ENCODE measurements at regions of chr14 and their contacts with region 1.

Region 1: GRCh38 chr14:20682435-20683124 is 1.8 kb upstream of the RNASE4 start:
- DNase-seq: peak; percentile 92
- ATAC-seq: peak; percentile 67
- H3K4me3 ChIP-seq: peak overlapping the region; percentile 65
- H3K27ac ChIP-seq: peak overlapping the region; percentile 90
- H3K4me1 ChIP-seq: no peaks in the 10 kb centered on the region
- H3K27me3 ChIP-seq: no peaks in the 10 kb centered on the region
- CTCF ChIP-seq: no peak
- POLR2A ChIP-seq: peak; percentile 92
- RAD21 ChIP-seq: no peak

Region 2: DNA sequence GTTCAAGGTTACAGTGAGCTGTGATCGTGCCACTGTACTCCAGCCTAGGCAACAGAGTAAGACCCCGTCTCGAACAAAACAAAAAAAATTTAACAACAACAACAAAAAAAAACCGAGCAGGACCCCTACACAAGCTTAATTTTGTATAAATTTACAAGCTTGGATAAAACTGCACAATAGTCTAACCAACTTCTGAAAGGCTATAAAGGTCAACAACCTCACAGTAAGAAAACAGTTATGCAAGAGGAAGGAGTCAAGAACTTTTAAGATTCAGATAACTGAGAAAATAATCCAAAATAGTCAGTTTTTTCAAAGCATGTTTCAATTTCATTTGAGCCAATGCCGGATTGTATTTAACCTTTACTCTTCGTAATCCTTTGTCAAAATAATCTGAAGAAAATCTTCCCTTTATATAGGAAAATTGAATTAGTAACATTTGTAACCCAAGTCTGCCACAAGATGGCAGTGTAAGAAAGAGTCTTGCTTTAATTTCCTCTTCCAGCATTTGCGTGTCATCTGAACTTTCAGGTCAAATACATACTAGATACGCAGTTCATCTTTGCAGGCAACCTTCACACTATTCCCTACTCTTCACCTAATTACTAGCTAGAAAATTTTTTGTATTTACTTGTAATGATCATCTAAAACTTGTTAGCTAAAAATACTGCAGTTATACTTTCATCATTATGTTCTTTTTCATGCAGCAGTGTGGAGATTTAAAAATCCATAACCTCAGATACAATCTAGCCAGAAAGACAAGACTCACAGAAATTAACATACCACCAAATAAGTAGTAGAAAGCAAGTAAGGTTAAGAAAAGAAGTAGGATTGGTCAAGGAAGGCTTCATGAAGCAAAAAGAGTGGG is 355.3 kb before region 1 on chr14:
- CTCF ChIA-PET with region 1: no interaction called
- POLR2A ChIA-PET with region 1: no interaction called
- dilution Hi-C with region 1: no loop called
- in situ Hi-C with region 1: loop called (anchors 10 kb)
- intact Hi-C with region 1: no loop called
- DNase-seq: peak; percentile 72
- ATAC-seq: peak; percentile 91
- H3K4me3 ChIP-seq: no peak overlapping the region
- H3K27ac ChIP-seq: no peak overlapping the region
- H3K4me1 ChIP-seq: no peaks in the 10 kb centered on the region
- H3K27me3 ChIP-seq: no peaks in the 10 kb centered on the region
- CTCF ChIP-seq: peak; percentile 76
- POLR2A ChIP-seq: no peak
- RAD21 ChIP-seq: peak; percentile 76

Region 3: GRCh38 chr14:20461274-20462001 is 221.1 kb before region 1 on chr14 and contains the start of gene PIP4P1:
- CTCF ChIA-PET with region 1: no interaction called
- POLR2A ChIA-PET with region 1: interaction called, 4 read pairs
- dilution Hi-C with region 1: no loop called
- in situ Hi-C with region 1: no loop called
- intact Hi-C with region 1: loop called (anchors 1 kb)
- DNase-seq: peak; percentile 100
- ATAC-seq: peak; percentile 96
- H3K4me3 ChIP-seq: peak within 1 kb of the TSS; percentile 53
- H3K27ac ChIP-seq: peak within 1 kb of the TSS; percentile 54
- H3K4me1 ChIP-seq: 0 out of 2 replicates have a peak, but pooled peaks cover 4% of the 10 kb centered on the region
- H3K27me3 ChIP-seq: no peaks in the 10 kb centered on the region
- CTCF ChIP-seq: no peak
- POLR2A ChIP-seq: no peak; the same call in none of the 2 replicates
- RAD21 ChIP-seq: no peak
- total RNA-seq, gene PIP4P1: 15.0 and 15.2 TPM in 2 replicates

Region 4: DNA sequence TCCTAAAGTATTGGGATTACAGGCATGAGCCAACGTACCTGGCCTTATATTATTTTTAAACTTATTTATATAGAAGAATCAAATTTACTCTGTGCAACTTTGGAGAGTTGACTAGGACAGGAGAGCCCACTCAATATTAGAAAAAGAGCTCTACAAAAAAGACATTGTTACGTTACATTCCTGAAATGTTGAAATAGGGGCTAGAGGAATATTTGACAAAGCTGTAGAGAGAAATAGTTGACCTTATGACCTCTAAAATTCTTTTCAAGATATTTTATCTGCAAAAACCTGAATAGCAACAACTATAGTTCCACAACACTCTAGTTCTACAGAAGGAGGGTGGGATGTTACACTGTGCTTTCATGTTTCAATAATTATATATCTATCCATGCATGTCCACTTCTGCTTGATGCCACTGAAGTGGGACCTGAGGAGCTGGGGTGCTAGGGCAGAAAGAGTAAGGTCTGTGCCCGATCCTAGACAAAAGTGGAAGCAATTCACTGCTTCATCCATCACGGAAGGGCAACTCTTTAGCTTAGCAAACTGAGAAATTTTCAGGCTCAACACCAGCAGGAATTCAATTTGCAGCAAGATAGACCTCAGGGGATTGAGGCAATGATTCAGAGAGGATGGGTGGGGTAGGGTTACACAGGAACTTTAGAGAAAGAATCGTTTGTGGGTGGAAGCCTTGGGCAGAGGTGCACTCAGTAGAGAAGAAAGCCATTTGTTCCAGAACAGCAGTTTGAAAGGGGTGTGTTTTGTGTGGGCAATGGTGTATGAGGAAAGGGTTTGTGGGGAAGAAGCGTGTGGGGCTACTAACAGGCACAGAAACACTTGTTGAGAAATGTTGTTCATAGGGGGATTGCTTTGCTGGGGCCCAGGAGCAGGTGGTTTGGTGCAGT is 193.2 kb before region 1 on chr14:
- CTCF ChIA-PET with region 1: no interaction called
- POLR2A ChIA-PET with region 1: no interaction called
- dilution Hi-C with region 1: no loop called
- in situ Hi-C with region 1: no loop called
- intact Hi-C with region 1: no loop called
- DNase-seq: peak; percentile 28
- ATAC-seq: no peak
- H3K4me3 ChIP-seq: no peak overlapping the region
- H3K27ac ChIP-seq: no peak overlapping the region
- H3K4me1 ChIP-seq: no peaks in the 10 kb centered on the region; the same call in 1 of the 2 replicates
- H3K27me3 ChIP-seq: no peaks in the 10 kb centered on the region; the same call in none of the 2 replicates
- CTCF ChIP-seq: no peak
- POLR2A ChIP-seq: no peak
- RAD21 ChIP-seq: no peak

Region 5: GRCh38 chr14:20632682-20633428 is 49.7 kb before region 1 on chr14:
- CTCF ChIA-PET with region 1: no interaction called
- POLR2A ChIA-PET with region 1: no interaction called
- dilution Hi-C with region 1: no loop called
- in situ Hi-C with region 1: loop called (anchors 5 kb)
- intact Hi-C with region 1: loop called (anchors 1 kb)
- DNase-seq: peak; percentile 85
- ATAC-seq: peak; percentile 82
- H3K4me3 ChIP-seq: peak overlapping the region; percentile 33; the same call in 1 of the 2 replicates
- H3K27ac ChIP-seq: no peak overlapping the region
- H3K4me1 ChIP-seq: no peaks in the 10 kb centered on the region
- H3K27me3 ChIP-seq: peaks cover 4% of the 10 kb centered on the region
- CTCF ChIP-seq: no peak
- POLR2A ChIP-seq: no peak
- RAD21 ChIP-seq: no peak

Measured in IMR-90 (cell line).